ENCODE measurements at regions of chr7 and their contacts with region 1.

Region 1: GRCh38 chr7:47979145-47979831 is at the start of gene HUS1:
- DNase-seq: peak; percentile 92 to 98
- H3K4me3 ChIP-seq: peak within 1 kb of the TSS; percentile 79 to 80 (median 80)
- H3K27ac ChIP-seq: peak within 1 kb of the TSS; percentile 86; the same call in 1 of the 2 replicates
- H3K4me1 ChIP-seq: peaks cover 0 to 4% (median 3%) of the 10 kb centered on the region in 4 experiments; a peak in 3 of 7 replicates
- H3K27me3 ChIP-seq: no peaks in the 10 kb centered on the region
- CTCF ChIP-seq: no peak
- EP300 ChIP-seq: 0 out of 3 replicates have a peak, but pooled peaks of 1 of the 2 experiments have one; percentile 50
- POLR2A ChIP-seq: peak; percentile 84 to 97
- RAD21 ChIP-seq: peak in 1 of 2 experiments; percentile 3; a peak in 1 of 4 replicates
- total RNA-seq, gene HUS1: 32.0 and 33.0 TPM in 2 replicates

Region 2: DNA sequence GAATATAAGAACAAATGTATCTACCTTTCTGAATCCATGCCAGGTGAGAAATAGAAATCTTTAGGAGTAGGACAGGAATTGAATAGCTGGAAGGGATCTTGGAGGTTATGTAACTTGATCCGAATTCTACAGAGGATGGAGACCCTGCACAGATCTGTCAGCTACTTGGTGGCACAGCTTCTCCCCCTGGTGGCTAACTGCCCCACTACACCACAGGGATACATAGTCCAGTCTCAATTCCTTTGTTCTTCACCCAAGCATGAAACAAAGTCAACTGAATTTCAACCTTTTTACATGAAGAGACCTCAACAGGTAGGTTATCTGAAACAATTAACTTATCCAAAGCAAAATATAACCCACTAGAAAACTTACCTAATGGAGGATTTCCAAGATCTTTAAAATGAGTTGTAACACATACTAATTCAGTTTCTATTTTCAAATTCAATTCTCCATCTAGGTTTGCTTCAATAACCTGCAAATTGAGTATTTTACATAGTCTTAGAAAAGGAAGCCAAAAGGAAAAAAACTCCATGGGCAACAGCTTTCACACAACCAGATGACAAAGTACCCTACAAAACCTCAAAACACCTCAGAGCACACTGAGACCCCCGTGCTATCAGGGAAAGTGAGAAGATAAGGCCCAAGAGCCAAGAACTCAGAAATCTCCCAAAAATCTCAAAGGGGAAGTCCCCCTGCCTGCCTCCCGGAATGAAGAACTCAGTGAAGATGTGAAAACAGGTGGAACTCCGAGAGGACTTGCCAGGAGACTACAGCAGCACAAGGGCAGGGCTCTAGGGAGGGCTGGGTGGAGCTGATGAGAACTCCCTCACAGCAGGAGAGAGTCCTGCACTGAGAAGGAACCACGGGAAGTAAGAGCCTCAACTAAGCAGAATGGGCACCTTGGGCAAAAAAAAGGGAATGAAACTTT is 10.2 kb before region 1 on chr7:
- CTCF ChIA-PET with region 1: interaction called, 16 read pairs
- POLR2A ChIA-PET with region 1: interaction called, 7 read pairs
- DNase-seq: peak; percentile 46 to 87
- H3K4me3 ChIP-seq: no peak overlapping the region
- H3K27ac ChIP-seq: no peak overlapping the region
- H3K4me1 ChIP-seq: no peaks in the 10 kb centered on the region
- H3K27me3 ChIP-seq: no peaks in the 10 kb centered on the region
- CTCF ChIP-seq: peak; percentile 76 to 95 (median 88)
- EP300 ChIP-seq: no peak
- POLR2A ChIP-seq: no peak
- RAD21 ChIP-seq: peak; percentile 83 to 84

Region 3: DNA sequence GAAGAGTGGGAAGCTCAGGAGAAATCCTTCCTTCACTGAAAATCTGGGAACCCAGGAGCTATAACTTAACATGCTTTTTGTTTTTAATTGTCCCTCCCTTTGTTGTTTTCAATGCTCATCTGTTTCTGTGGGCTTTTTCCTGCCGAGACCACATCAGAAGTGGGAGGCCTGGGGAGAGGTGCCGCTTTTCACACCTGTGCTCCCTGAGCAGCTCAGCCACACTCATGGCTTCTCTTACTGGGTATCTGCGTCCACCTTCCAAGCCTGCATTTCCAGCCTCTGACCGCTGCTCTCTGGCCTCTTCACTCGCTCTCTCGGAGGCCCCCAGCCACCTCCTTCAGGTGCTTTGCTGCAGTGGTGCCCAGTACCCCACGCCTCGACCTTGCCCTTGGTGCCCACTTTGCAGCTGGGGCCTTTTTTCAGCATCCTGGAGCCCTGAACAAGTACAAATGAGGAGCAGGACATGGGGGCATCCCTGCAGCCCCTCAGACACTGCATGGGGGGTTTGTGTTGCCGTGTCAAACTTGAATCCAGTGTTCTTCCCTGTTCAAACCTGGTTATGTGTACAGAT is 66.0 kb after region 1 on chr7:
- CTCF ChIA-PET with region 1: no interaction called
- POLR2A ChIA-PET with region 1: no interaction called
- DNase-seq: no peak
- H3K4me3 ChIP-seq: no peak overlapping the region
- H3K27ac ChIP-seq: no peak overlapping the region
- H3K4me1 ChIP-seq: peaks cover 3 to 14% (median 6%) of the 10 kb centered on the region in 4 experiments; a peak in 6 of 7 replicates
- H3K27me3 ChIP-seq: no peaks in the 10 kb centered on the region
- CTCF ChIP-seq: no peak
- EP300 ChIP-seq: no peak
- POLR2A ChIP-seq: no peak
- RAD21 ChIP-seq: no peak

Measured in H1 (cell line).